A673 (cell line): ENCODE measurements at regions of chr7 and their contacts with region 1.

Region 1: GRCh38 chr7:110090110-110090769 is 1000.7 kb upstream of the LRRN3 start:
- DNase-seq: peak; percentile 32
- H3K4me3 ChIP-seq: no peak overlapping the region
- H3K27ac ChIP-seq: no peak overlapping the region
- H3K4me1 ChIP-seq: no peaks in the 10 kb centered on the region
- H3K27me3 ChIP-seq: no peaks in the 10 kb centered on the region
- CTCF ChIP-seq: peak; percentile 60

Region 2: DNA sequence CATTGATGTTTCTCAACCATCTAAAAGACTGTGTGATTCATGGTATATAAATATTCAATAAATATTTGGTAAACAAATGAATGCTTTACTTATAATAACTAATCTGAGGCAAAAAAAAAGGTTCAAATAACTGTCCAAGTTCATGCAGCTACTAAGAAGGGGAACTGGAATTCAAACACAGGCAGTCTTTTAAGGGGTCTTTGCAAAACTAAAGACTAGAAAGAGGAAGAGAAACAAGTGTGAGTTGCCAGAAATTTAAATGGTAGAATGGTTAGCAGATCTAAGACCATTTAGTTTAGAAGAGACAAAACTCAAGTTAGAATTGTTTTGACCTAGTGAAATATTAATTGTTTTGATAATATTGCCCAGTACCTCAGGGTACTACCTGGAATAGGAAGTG is 358.7 kb after region 1 on chr7:
- CTCF ChIA-PET with region 1: no interaction called
- POLR2A ChIA-PET with region 1: no interaction called
- intact Hi-C with region 1: loop called (anchors 5 kb)
- DNase-seq: no peak
- H3K4me3 ChIP-seq: no peak overlapping the region
- H3K27ac ChIP-seq: no peak overlapping the region
- H3K4me1 ChIP-seq: no peaks in the 10 kb centered on the region
- H3K27me3 ChIP-seq: no peaks in the 10 kb centered on the region
- CTCF ChIP-seq: no peak